ENCODE measurements at regions of chr10 and their contacts with region 1.

Region 1: GRCh38 chr10:132571650-132572535 is 34.3 kb downstream of the INPP5A start:
- DNase-seq: peak; percentile 95
- ATAC-seq: peak; percentile 67
- H3K4me3 ChIP-seq: peak overlapping the region; percentile 21; the same call in 1 of the 2 replicates
- H3K27ac ChIP-seq: peak overlapping the region; percentile 66
- H3K4me1 ChIP-seq: peaks cover 49% of the 10 kb centered on the region
- H3K27me3 ChIP-seq: no peaks in the 10 kb centered on the region
- CTCF ChIP-seq: no peak
- EP300 ChIP-seq: peak; percentile 78 to 84
- POLR2A ChIP-seq: no peak; the same call in 1 of the 2 replicates
- RAD21 ChIP-seq: no peak

Region 2: GRCh38 chr10:132319853-132320669 is 251.8 kb before region 1 on chr10:
- CTCF ChIA-PET with region 1: no interaction called
- POLR2A ChIA-PET with region 1: no interaction called
- RAD21 ChIA-PET with region 1: no interaction called
- SMC1A ChIA-PET with region 1: no interaction called
- in situ Hi-C with region 1: no loop called
- intact Hi-C with region 1: loop called (anchors 10 kb)
- DNase-seq: peak; percentile 66
- ATAC-seq: peak; percentile 100
- H3K4me3 ChIP-seq: no peak overlapping the region
- H3K27ac ChIP-seq: peak overlapping the region; percentile 17; the same call in 1 of the 2 replicates
- H3K4me1 ChIP-seq: peaks cover 27% of the 10 kb centered on the region
- H3K27me3 ChIP-seq: no peaks in the 10 kb centered on the region
- CTCF ChIP-seq: no peak
- EP300 ChIP-seq: peak in 1 of 2 experiments; percentile 83; a peak in 1 of 4 replicates
- POLR2A ChIP-seq: no peak
- RAD21 ChIP-seq: 0 out of 2 replicates have a peak, but pooled peaks have one; percentile 5

Region 3: GRCh38 chr10:132395704-132396494 is 176.0 kb before region 1 on chr10:
- CTCF ChIA-PET with region 1: no interaction called
- POLR2A ChIA-PET with region 1: no interaction called
- RAD21 ChIA-PET with region 1: no interaction called
- SMC1A ChIA-PET with region 1: no interaction called
- in situ Hi-C with region 1: no loop called
- intact Hi-C with region 1: no loop called
- DNase-seq: no peak
- ATAC-seq: peak; percentile 22
- H3K4me3 ChIP-seq: no peak overlapping the region
- H3K27ac ChIP-seq: no peak overlapping the region
- H3K4me1 ChIP-seq: peaks cover 8% of the 10 kb centered on the region; the same call in 1 of the 2 replicates
- H3K27me3 ChIP-seq: peaks cover 0 to 3% of the 10 kb centered on the region in 2 experiments; a peak in 3 of 4 replicates
- CTCF ChIP-seq: 0 out of 6 replicates have a peak, but pooled peaks of 1 of the 3 experiments have one; percentile 0
- EP300 ChIP-seq: no peak
- POLR2A ChIP-seq: no peak
- RAD21 ChIP-seq: no peak

Region 4: GRCh38 chr10:132536971-132537712 is 34.8 kb before region 1 on chr10:
- CTCF ChIA-PET with region 1: interaction called, 27 read pairs
- POLR2A ChIA-PET with region 1: interaction called, 29 read pairs
- RAD21 ChIA-PET with region 1: interaction called, 91 read pairs
- SMC1A ChIA-PET with region 1: interaction called, 61 read pairs
- in situ Hi-C with region 1: no loop called
- intact Hi-C with region 1: loop called (anchors 1 kb)
- DNase-seq: peak; percentile 84
- ATAC-seq: peak; percentile 84
- H3K4me3 ChIP-seq: peak overlapping the region; percentile 68
- H3K27ac ChIP-seq: no peak overlapping the region
- H3K4me1 ChIP-seq: peaks cover 29% of the 10 kb centered on the region
- H3K27me3 ChIP-seq: no peaks in the 10 kb centered on the region
- CTCF ChIP-seq: peak; percentile 5 to 43 (median 13); a peak in 4 of 6 replicates
- EP300 ChIP-seq: no peak
- POLR2A ChIP-seq: peak; percentile 52; the same call in 1 of the 2 replicates
- RAD21 ChIP-seq: peak; percentile 31; the same call in 1 of the 2 replicates

Region 5: DNA sequence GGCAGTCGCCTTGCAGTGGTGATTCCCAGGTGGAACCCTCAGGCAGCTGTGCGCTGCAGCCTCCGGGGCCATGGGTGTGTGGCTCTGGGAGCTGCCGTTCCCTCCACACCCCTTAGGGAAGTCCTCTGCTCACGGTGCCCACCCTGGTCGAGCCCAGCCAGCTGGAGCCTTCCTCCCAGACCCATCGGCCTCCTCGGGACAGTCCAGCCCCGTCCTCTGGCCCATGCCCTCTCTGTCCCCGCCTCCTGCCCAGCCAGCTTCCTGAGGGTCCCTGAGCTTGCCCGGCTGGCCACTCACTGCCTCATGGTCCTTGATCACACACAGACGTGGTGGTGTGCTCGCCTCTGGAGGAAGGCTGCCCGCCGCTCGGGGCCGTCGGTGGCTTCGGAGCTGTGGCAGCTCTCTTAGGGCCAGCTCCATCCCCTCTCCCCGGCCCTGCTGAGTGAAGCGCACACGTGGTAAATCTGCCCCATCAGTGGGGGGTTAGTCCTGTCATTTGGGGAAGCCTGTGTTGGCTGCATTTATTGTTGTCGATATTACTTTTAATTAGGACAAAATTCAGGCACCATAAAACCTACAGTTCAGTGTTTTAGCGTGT is 13.0 kb before region 1 on chr10:
- CTCF ChIA-PET with region 1: interaction called, 4 read pairs
- POLR2A ChIA-PET with region 1: interaction called, 8 read pairs
- RAD21 ChIA-PET with region 1: interaction called, 17 read pairs
- SMC1A ChIA-PET with region 1: interaction called, 13 read pairs
- in situ Hi-C with region 1: no loop called
- intact Hi-C with region 1: loop called (anchors 1 kb)
- DNase-seq: no peak
- ATAC-seq: no peak
- H3K4me3 ChIP-seq: no peak overlapping the region
- H3K27ac ChIP-seq: no peak overlapping the region
- H3K4me1 ChIP-seq: peaks cover 44% of the 10 kb centered on the region
- H3K27me3 ChIP-seq: no peaks in the 10 kb centered on the region
- CTCF ChIP-seq: no peak
- EP300 ChIP-seq: no peak
- POLR2A ChIP-seq: no peak
- RAD21 ChIP-seq: no peak

Region 6: GRCh38 chr10:132593900-132594876 is 22.3 kb after region 1 on chr10:
- CTCF ChIA-PET with region 1: interaction called, 17 read pairs
- POLR2A ChIA-PET with region 1: interaction called, 26 read pairs
- RAD21 ChIA-PET with region 1: interaction called, 84 read pairs
- SMC1A ChIA-PET with region 1: interaction called, 62 read pairs
- in situ Hi-C with region 1: no loop called
- intact Hi-C with region 1: loop called (anchors 1 kb)
- DNase-seq: peak; percentile 54
- ATAC-seq: peak; percentile 89
- H3K4me3 ChIP-seq: peak overlapping the region; percentile 16; the same call in 1 of the 2 replicates
- H3K27ac ChIP-seq: peak overlapping the region; percentile 35
- H3K4me1 ChIP-seq: peaks cover 19% of the 10 kb centered on the region
- H3K27me3 ChIP-seq: no peaks in the 10 kb centered on the region
- CTCF ChIP-seq: no peak
- EP300 ChIP-seq: peak; percentile 46 to 83; a peak in 3 of 4 replicates
- POLR2A ChIP-seq: no peak
- RAD21 ChIP-seq: no peak